Left cardiac atrium (tissue), 4 donors: ENCODE measurements at regions of chr6 and their contacts with region 1.

Region 1: DNA sequence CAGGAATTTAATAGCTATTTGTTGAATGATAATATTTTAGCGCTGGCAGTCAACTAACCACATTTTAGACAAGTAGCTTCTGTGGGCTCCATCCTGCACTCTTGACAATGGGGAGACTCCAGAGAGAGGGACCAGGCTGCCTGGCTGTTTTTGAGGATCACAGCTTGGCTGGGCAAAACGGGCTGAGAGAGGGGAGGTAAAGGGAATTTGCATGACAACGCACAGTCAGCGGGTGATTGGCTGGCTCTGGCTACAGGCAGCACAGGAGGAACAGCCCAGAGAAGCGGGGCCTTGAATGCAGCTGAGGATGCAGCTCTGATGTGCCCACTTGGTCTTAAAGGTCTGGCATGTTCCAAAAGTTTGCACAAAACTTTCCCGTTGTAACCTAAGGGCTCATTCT is 41.2 kb downstream of the LRFN2 start:
- DNase-seq: no peak
- ATAC-seq: no peak

Region 2: DNA sequence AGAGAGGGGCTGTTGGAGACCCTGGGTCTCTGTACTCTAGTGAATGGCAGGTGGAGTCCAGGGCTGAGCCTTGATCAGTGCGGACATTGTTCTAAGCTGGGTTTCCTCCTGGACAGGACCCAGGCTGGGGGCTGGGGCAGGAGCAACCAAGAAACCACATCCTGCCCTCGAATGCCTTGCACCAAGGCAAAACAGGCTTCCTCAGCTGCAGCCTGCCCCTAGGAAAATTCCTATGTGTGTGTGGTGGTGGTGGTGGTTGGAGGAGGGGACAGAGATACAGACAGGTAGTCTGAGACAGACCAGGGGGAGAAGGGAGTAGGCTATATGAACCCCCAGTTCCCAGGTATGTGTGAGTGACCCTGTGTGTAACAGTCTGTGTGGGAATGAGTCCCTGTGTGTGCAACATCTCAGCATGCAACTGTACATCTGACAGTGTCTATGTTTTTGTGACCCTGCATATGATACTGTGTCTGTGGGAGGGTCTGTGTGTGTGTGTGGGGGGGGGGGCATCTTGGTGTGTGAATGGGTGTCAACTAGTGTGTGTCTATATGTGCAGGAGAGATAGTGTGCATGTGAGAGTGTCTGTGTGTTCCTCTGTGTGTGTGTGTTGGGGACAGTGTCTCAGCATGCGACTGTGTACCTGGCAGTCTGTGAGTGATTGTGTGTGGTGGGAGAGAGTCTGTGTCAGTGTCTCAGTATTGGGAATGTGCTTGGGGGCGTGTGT is 1494.4 kb before region 1 on chr6:
- intact Hi-C with region 1: no loop called
- DNase-seq: no peak
- ATAC-seq: no peak

Region 3: DNA sequence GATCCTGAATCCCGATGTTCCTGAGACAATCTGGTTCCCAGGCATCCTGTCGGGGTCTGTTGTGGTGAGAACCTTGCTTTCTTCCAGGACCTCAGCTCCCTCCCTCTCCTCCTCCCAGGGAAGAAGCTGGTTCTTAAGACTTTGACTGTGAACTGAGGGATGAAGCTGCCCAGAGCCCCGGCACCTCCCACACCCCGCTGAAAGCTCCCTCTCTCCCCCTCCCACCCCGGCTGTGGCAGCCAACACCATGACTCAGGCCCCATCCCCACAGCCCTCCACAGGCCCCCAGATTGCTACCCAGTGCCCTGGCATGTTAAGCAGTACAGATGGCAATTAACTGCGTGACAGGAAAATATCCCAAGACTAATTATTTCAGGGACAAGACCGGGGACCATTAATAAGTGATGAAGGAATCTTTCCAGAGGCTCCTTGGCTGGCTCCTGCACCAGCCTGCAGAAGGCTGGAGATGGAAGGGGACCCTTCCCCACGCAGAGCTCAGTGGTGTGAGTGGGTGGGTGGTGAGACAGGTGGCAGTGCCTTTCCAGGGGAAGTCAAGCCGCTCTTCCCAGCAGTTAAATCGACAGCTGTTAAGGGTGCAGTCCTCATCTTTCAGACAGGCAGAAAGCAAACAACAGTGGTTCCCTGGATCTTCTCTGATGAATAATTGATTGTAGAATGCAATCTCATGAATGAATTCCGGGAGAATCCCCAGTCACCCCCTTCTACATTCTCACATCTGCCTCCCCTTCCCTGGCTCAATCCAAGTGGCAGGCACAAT is 196.6 kb before region 1 on chr6:
- intact Hi-C with region 1: loop called in 1 of 2 experiments (anchors 10 kb)
- DNase-seq: no peak
- ATAC-seq: peak in 1 of 2 donors; percentile 37

Region 4: DNA sequence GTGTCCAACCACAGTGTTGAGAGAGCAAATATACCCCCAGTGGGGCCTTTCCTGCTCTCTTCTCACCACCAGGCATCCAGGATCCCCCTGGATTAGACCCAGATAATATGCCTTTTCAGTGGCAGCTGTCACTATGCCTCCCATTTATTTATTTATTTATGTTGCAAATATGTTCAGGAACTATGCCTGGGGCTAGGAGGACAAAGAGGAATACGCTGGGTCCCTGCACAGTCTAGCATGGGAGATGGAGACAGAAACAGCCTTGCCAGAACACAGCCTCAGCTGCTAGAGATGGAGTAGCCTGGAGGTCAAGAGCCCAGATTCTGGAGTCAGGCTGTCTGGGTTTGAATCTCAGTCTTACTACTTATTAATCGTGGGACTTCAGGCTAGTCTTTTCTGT is 115.8 kb after region 1 on chr6:
- intact Hi-C with region 1: no loop called
- DNase-seq: no peak
- ATAC-seq: no peak